AG04450 (cell line): ENCODE measurements at regions of chr2 and their contacts with region 1.

Region 1: GRCh38 chr2:216905649-216906329 is 45.9 kb upstream of the TNP1 start:
- DNase-seq: no peak
- H3K4me3 ChIP-seq: no peak overlapping the region
- H3K27ac ChIP-seq: no peak overlapping the region
- H3K27me3 ChIP-seq: no peaks in the 10 kb centered on the region
- CTCF ChIP-seq: no peak

Region 2: DNA sequence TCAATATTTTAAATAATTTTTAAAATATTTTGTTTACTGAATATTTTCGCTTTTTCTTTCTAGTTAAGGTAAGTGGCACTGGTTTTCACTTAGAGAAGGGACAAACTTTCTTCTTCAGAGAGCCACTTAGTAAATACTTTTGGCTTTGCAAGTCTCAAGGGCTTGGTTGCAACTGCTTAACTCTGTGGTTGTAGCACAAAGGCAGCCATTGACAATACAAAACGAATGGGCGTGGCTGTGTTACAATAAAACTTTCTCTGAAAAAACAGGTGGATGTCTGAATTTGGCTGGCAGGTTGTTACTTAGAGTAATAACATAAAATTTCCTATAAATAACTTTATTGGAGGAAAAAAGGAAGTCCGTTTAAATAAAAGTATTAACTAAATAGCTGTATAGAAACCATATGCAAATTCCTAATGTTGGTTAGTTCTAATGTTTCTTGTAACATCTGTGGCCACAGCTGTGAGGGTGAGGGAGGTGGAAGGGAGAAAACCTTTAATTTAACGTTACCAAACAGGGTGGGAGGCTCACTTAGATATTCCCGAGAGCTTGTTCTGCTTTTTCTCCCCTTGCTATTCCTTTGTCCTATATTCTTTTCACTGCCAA is 16.5 kb after region 1 on chr2:
- CTCF ChIA-PET with region 1: no interaction called
- POLR2A ChIA-PET with region 1: no interaction called
- DNase-seq: no peak
- H3K4me3 ChIP-seq: no peak overlapping the region
- H3K27ac ChIP-seq: no peak overlapping the region
- H3K27me3 ChIP-seq: no peaks in the 10 kb centered on the region
- CTCF ChIP-seq: no peak

Region 3: GRCh38 chr2:216936954-216937357 is 31.2 kb after region 1 on chr2:
- CTCF ChIA-PET with region 1: interaction called, 10 read pairs
- POLR2A ChIA-PET with region 1: no interaction called
- DNase-seq: no peak
- H3K4me3 ChIP-seq: no peak overlapping the region
- H3K27ac ChIP-seq: no peak overlapping the region
- H3K27me3 ChIP-seq: no peaks in the 10 kb centered on the region
- CTCF ChIP-seq: no peak

Region 4: DNA sequence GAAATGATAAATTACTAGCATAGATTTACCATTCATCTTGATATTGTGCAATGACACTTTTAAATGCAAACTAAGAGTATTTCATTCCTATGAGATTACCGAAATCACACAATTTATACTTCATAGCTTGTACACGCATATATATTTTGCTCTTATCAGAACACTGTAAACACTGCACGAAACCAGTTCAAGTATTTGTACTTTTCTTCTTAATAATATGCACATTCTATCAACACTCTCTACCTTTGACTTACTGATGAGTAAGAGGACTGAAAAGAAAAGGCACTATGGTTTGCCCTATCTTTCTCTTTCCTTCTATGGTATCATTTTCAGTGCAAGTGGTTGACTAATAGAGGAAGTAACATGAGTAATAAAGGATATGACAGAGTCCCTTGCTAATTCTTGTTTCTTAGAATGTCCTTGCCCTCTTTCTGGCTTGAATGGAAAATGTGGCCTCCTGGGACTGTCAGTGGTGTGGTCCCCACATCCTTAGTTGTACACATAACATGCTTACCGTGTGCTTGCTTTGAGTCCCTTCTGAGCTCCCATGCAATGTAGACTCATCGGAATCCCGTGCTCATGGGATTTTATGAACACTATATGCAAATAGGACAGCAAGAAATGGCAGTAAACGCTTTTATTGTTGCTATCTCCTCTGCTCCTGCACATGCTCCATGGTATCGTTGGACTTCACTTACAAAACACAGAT is 317.6 kb after region 1 on chr2:
- CTCF ChIA-PET with region 1: interaction called, 22 read pairs
- POLR2A ChIA-PET with region 1: no interaction called
- DNase-seq: peak; percentile 90
- H3K4me3 ChIP-seq: no peak overlapping the region
- H3K27ac ChIP-seq: peak overlapping the region; percentile 97
- H3K27me3 ChIP-seq: no peaks in the 10 kb centered on the region
- CTCF ChIP-seq: no peak